ENCODE measurements at regions of chr16 and their contacts with region 1.

Region 1: DNA sequence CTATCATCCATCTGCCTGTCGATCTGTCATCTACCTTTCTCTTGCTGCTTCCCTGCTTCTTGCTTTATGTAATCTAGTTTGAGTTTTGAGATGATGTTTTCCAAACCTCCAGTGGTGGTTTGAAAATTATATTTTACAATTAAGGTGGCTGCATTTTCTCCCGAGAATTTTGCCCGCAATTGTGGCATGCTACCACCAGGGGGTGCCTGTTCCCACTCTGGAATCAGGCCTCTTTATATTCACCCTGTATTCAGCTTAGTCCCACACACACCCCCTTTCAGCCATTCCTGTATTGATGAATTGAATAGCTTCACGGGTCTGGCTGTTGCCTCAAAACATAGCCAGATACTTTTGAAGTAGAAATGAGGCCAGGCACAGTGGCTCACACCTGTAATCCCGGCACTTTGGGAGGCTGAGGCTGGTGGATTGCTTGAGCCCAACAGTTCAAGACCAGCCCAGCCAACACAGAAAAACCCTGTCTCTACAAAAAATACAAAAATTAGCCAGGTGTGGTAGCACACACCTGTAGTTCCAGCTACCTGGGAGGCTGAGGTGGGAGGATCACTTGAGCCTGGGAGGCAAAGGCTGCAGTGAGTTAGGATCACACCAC is 3.2 kb downstream of the PRSS22 start:
- DNase-seq: no peak
- H3K4me3 ChIP-seq: peak overlapping the region; percentile 27; the same call in 1 of the 2 replicates
- H3K27ac ChIP-seq: no peak overlapping the region
- H3K4me1 ChIP-seq: peaks cover 40% of the 10 kb centered on the region
- H3K27me3 ChIP-seq: no peaks in the 10 kb centered on the region
- CTCF ChIP-seq: peak; percentile 96

Region 2: GRCh38 chr16:2752850-2753732 is 101.7 kb before region 1 on chr16:
- CTCF ChIA-PET with region 1: no interaction called
- POLR2A ChIA-PET with region 1: no interaction called
- intact Hi-C with region 1: no loop called
- DNase-seq: peak; percentile 57 to 89
- H3K4me3 ChIP-seq: peak overlapping the region; percentile 90
- H3K27ac ChIP-seq: peak overlapping the region; percentile 96
- H3K4me1 ChIP-seq: peaks cover 26% of the 10 kb centered on the region
- H3K27me3 ChIP-seq: no peaks in the 10 kb centered on the region
- CTCF ChIP-seq: no peak

Region 3: GRCh38 chr16:2763173-2763572 is 91.6 kb before region 1 on chr16:
- CTCF ChIA-PET with region 1: no interaction called
- POLR2A ChIA-PET with region 1: no interaction called
- intact Hi-C with region 1: no loop called
- DNase-seq: no peak
- H3K4me3 ChIP-seq: no peak overlapping the region
- H3K27ac ChIP-seq: no peak overlapping the region
- H3K4me1 ChIP-seq: no peaks in the 10 kb centered on the region
- H3K27me3 ChIP-seq: no peaks in the 10 kb centered on the region
- CTCF ChIP-seq: no peak

Region 4: GRCh38 chr16:2777231-2777902 is 77.4 kb before region 1 on chr16 and contains the start of gene ELOB:
- CTCF ChIA-PET with region 1: no interaction called
- POLR2A ChIA-PET with region 1: interaction called, 7 read pairs
- intact Hi-C with region 1: loop called (anchors 2 kb)
- DNase-seq: peak; percentile 46 to 88
- H3K4me3 ChIP-seq: peak within 1 kb of the TSS; percentile 78
- H3K27ac ChIP-seq: peak within 1 kb of the TSS; percentile 94
- H3K4me1 ChIP-seq: peaks cover 20% of the 10 kb centered on the region
- H3K27me3 ChIP-seq: no peaks in the 10 kb centered on the region
- CTCF ChIP-seq: no peak
- total RNA-seq, gene ELOB: 259 and 401 TPM in 2 replicates

Region 5: GRCh38 chr16:2816751-2817339 is 38.0 kb before region 1 on chr16 and contains the start of gene PRSS21:
- CTCF ChIA-PET with region 1: no interaction called
- POLR2A ChIA-PET with region 1: no interaction called
- intact Hi-C with region 1: loop called (anchors 5 kb)
- DNase-seq: peak; percentile 38 to 75
- H3K4me3 ChIP-seq: peak within 1 kb of the TSS; percentile 81
- H3K27ac ChIP-seq: no peak within 1 kb of the TSS
- H3K4me1 ChIP-seq: peaks cover 28% of the 10 kb centered on the region
- H3K27me3 ChIP-seq: no peaks in the 10 kb centered on the region
- CTCF ChIP-seq: peak; percentile 73
- total RNA-seq, gene PRSS21: 61.2 and 77.4 TPM in 2 replicates

Region 6: GRCh38 chr16:2838928-2839327 is 15.9 kb before region 1 on chr16:
- CTCF ChIA-PET with region 1: interaction called, 4 read pairs
- POLR2A ChIA-PET with region 1: no interaction called
- intact Hi-C with region 1: loop called (anchors 1 kb)
- DNase-seq: no peak
- H3K4me3 ChIP-seq: no peak overlapping the region
- H3K27ac ChIP-seq: no peak overlapping the region
- H3K4me1 ChIP-seq: peaks cover 32% of the 10 kb centered on the region
- H3K27me3 ChIP-seq: no peaks in the 10 kb centered on the region
- CTCF ChIP-seq: 0 out of 2 replicates have a peak, but pooled peaks have one; percentile 52

Region 7: GRCh38 chr16:2874912-2875362 is 20.1 kb after region 1 on chr16:
- CTCF ChIA-PET with region 1: interaction called, 11 read pairs
- POLR2A ChIA-PET with region 1: no interaction called
- intact Hi-C with region 1: no loop called
- DNase-seq: peak; percentile 57 to 66
- H3K4me3 ChIP-seq: no peak overlapping the region
- H3K27ac ChIP-seq: no peak overlapping the region
- H3K4me1 ChIP-seq: 0 out of 2 replicates have a peak, but pooled peaks cover 6% of the 10 kb centered on the region
- H3K27me3 ChIP-seq: no peaks in the 10 kb centered on the region
- CTCF ChIP-seq: peak; percentile 89

Measured in PC-9 (cell line).